ENCODE measurements at regions of chr18 and their contacts with region 1.

Region 1: DNA sequence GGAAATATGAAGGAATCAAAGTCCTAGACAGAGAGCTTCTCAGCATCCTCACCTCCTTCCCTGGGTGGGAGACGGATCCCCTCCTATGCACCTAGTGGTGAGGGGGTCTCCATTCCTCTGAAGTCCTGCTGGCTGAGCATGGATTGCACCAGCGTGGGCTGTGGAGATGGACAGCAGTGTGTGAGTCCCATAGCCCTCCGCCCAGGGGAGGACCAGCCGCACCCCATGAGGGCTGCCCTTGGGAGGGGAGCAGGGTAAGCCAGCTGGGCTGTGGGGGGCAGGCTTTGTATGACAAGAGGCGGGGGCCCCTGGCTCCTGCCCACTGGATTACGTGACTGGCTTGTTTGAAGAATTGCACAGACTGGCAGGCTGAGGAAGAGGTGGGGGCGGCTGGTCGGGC is 768.2 kb downstream of the GALR1 start:
- DNase-seq: no peak
- ATAC-seq: no peak
- H3K4me3 ChIP-seq: no peak overlapping the region
- H3K27ac ChIP-seq: no peak overlapping the region
- H3K4me1 ChIP-seq: no peaks in the 10 kb centered on the region
- H3K27me3 ChIP-seq: no peaks in the 10 kb centered on the region
- CTCF ChIP-seq: no peak
- POLR2A ChIP-seq: no peak
- RAD21 ChIP-seq: no peak

Region 2: GRCh38 chr18:77702686-77703085 is 315.2 kb before region 1 on chr18:
- CTCF ChIA-PET with region 1: no interaction called
- POLR2A ChIA-PET with region 1: interaction called, 18 read pairs
- dilution Hi-C with region 1: no loop called
- in situ Hi-C with region 1: no loop called
- intact Hi-C with region 1: no loop called
- DNase-seq: peak; percentile 2
- ATAC-seq: no peak
- H3K4me3 ChIP-seq: no peak overlapping the region
- H3K27ac ChIP-seq: no peak overlapping the region
- H3K4me1 ChIP-seq: no peaks in the 10 kb centered on the region
- H3K27me3 ChIP-seq: no peaks in the 10 kb centered on the region
- CTCF ChIP-seq: no peak
- POLR2A ChIP-seq: no peak
- RAD21 ChIP-seq: no peak